ENCODE measurements at regions of chr20 and their contacts with region 1.

Region 1: GRCh38 chr20:34704177-34705007 is at the start of gene TP53INP2:
- DNase-seq: peak; percentile 95
- H3K4me3 ChIP-seq: peak within 1 kb of the TSS; percentile 63 to 79 (median 71)
- H3K27ac ChIP-seq: peak within 1 kb of the TSS; percentile 82 to 100 (median 99)
- H3K4me1 ChIP-seq: peaks cover 7 to 62% (median 39%) of the 10 kb centered on the region in 6 donors
- H3K27me3 ChIP-seq: no peaks in the 10 kb centered on the region
- CTCF ChIP-seq: peak in 4 of 11 experiments; percentile 10 to 29 (median 22)
- POLR2A ChIP-seq: peak in 1 of 3 donors; percentile 35
- total RNA-seq, gene TP53INP2: 4.8 to 10.6 (median 7.4) TPM

Region 2: GRCh38 chr20:34544109-34544793 is 160.1 kb before region 1 on chr20:
- intact Hi-C with region 1: loop called (anchors 5 kb)
- DNase-seq: no peak
- H3K4me3 ChIP-seq: peak overlapping the region in 3 of 8 donors; percentile 15 to 44 (median 15)
- H3K27ac ChIP-seq: no peak overlapping the region
- H3K4me1 ChIP-seq: peaks cover 6 to 43% (median 30%) of the 10 kb centered on the region in 6 donors
- H3K27me3 ChIP-seq: no peaks in the 10 kb centered on the region
- CTCF ChIP-seq: no peak
- POLR2A ChIP-seq: no peak

Region 3: GRCh38 chr20:34842143-34842542 is 137.8 kb after region 1 on chr20:
- intact Hi-C with region 1: no loop called
- DNase-seq: no peak
- H3K4me3 ChIP-seq: no peak overlapping the region
- H3K27ac ChIP-seq: no peak overlapping the region
- H3K4me1 ChIP-seq: no peaks in the 10 kb centered on the region
- H3K27me3 ChIP-seq: no peaks in the 10 kb centered on the region
- CTCF ChIP-seq: no peak
- POLR2A ChIP-seq: no peak

Region 4: DNA sequence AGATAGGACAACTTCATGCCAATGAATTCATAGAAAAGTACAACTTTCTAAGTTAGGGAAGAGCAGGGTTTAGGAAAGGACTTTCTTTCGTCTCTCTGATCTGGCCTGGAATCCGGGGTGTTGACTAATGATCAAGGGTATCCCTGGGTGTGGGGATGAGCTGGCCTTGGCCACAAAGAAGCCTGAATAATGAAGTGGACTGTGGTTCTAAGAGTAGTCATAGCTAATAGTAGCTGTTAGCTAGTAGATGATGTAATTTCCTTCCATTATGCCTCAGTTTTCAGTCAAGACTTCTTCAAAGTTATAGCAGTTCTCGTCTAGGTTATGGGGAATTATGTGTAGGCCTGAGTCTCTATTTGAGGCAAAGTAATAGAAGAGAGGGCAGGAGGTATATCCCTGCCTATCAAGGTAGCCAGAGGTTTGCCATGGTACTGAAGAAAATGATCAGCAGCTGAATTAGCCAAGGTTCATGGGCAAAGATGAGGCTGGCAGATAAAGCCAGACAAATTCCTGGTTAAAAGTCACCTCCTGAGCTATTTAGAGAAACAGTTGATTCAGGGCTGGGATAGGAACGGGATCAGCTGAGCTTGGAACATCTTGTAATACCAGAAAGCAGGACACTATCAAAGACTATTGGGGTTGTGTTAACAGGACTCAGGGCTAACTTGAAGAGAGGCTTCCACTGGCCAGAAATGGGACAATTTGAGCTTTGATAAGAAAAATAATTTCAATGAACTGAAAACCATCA is 406.9 kb after region 1 on chr20:
- intact Hi-C with region 1: no loop called
- DNase-seq: no peak
- H3K4me3 ChIP-seq: no peak overlapping the region
- H3K27ac ChIP-seq: no peak overlapping the region
- H3K4me1 ChIP-seq: no peaks in the 10 kb centered on the region
- H3K27me3 ChIP-seq: no peaks in the 10 kb centered on the region
- CTCF ChIP-seq: no peak
- POLR2A ChIP-seq: no peak

Region 5: DNA sequence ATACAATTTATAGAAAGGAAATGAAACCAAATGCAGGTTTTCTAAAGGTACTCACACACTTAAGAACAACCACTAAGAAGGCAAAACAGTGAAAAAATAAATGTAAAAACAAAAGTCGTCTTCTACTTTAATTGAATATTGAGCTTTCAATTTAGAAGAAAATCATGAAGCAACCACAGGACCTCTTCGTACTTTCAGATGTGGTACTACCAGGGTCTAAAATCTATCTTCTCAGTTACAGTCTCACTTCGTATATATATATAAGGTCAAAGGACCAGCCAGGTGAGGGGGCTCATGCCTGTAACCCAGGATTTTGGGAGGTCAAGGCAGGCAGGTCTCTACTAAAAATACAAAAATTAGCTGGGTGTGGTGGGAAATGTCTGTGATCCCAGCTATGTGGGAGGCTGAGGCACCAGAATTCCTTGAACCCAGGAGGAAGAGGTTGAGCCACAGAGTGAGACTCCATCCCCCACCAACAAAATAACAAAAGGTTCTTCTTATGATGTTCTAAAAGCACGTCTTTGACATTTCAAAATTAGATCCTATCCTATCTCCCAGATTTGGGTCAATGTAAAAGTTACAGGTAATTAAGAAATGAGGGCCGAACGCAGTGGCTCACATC is 1007.3 kb after region 1 on chr20:
- intact Hi-C with region 1: no loop called
- DNase-seq: no peak
- H3K4me3 ChIP-seq: no peak overlapping the region
- H3K27ac ChIP-seq: peak overlapping the region in 1 of 8 donors; percentile 41
- H3K4me1 ChIP-seq: peaks cover 16 to 96% (median 50%) of the 10 kb centered on the region in 6 donors
- H3K27me3 ChIP-seq: no peaks in the 10 kb centered on the region
- CTCF ChIP-seq: no peak
- POLR2A ChIP-seq: no peak